Heart right ventricle (tissue), 16 donors: ENCODE measurements at regions of chr19 and their contacts with region 1.

Region 1: DNA sequence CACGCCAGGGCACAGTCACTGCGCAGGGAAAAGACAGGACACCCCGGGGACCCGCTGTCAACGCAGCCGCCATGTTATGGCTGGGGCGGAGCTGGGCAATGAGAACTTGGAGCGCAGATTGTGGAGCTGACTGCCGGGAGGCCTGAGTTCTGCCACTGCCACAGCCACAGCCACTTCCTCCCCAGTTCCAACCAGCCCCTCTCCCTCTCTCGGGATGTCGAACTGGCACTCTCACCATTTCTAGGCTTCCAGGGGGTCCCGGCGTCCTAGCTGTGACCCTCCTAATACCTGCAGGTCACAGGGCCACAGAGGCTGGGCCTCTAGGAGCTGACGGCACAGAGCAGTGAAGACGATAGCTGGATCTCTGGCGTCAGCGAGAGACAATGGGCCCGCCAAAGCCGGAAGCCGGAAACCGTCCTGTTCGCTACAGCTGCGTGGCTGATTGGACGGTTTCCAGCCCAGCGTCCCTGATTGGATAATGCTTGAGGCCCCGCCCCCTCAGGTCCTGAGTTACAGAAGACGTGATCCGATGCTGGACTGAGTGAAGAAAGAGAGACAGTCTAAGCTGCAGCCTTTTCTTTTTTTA is at the start of gene ZNF506:
- DNase-seq: peak; percentile 98 to 100
- ATAC-seq: peak; percentile 98 to 99 (median 98)
- H3K4me3 ChIP-seq: peak within 1 kb of the TSS; percentile 59 to 98 (median 73)
- H3K27ac ChIP-seq: peak within 1 kb of the TSS; percentile 86 to 99 (median 96)
- H3K4me1 ChIP-seq: peaks cover 0 to 43% (median 27%) of the 10 kb centered on the region in 9 donors
- H3K27me3 ChIP-seq: no peaks in the 10 kb centered on the region
- CTCF ChIP-seq: no peak
- total RNA-seq, gene ZNF506: 11.1 to 17.0 (median 13.4) TPM

Region 2: GRCh38 chr19:19663256-19664038 is 158.0 kb before region 1 on chr19 and contains the start of gene ATP13A1:
- intact Hi-C with region 1: loop called in 3 of 10 experiments (anchors 2 to 10 kb)
- DNase-seq: peak; percentile 95 to 97
- ATAC-seq: peak; percentile 97 to 98 (median 98)
- H3K4me3 ChIP-seq: peak within 1 kb of the TSS; percentile 77 to 100 (median 93)
- H3K27ac ChIP-seq: peak within 1 kb of the TSS; percentile 86 to 98 (median 92)
- H3K4me1 ChIP-seq: peaks cover 5 to 38% (median 20%) of the 10 kb centered on the region in 9 donors
- H3K27me3 ChIP-seq: no peaks in the 10 kb centered on the region
- CTCF ChIP-seq: peak in 4 of 9 donors; percentile 9 to 42 (median 16)
- total RNA-seq, gene ATP13A1: 12.3 to 28.2 (median 18.4) TPM

Region 3: DNA sequence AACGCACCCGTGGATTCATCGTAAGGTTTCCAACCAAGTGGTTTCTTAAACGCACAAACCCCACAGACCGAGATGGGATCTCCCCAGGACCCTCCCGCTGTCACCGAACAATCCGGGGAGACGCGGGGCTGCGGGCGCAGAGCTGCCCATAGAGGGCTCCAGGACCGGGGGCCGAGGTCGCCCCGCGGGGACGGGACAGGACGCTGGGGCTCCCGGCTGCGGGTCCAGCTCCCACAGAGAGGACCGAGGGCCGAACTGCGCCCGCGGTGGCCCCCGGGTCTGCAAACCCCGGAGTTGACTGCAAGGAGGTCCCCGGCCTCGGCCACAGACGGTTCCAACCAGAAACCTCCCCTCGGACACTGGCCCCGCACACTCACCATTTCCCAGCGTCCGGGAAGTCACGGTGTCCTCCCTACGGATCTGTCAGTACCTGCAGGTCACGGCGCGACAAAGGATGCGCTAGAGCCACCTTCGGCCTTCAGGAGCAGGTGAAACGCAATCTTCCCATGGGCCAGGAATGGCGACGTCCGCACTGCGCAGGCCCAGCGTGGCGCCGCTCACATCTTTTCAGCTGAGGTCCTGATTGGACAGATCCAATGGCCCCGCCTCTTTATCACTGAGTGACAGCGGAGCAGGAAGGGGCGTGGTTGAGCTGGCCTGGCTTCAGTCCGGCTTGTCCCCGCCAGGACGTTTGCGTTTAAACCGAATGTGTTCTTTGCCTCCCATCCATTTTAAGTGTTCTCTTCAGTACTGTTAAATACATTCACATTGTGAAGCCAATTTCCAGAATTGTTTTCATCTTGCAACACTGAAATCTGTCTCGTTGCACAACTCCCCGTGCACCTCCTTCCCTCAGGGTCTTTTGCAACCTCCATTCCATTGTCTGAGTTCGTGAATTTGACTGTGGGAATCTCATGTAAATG is 88.6 kb before region 1 on chr19 and contains the start of gene ZNF14:
- intact Hi-C with region 1: loop called in 3 of 10 experiments (anchors 2 to 5 kb)
- DNase-seq: peak; percentile 90 to 96
- ATAC-seq: peak; percentile 100
- H3K4me3 ChIP-seq: peak within 1 kb of the TSS; percentile 64 to 95 (median 86)
- H3K27ac ChIP-seq: peak within 1 kb of the TSS in 9 of 10 donors; percentile 61 to 87 (median 72)
- H3K4me1 ChIP-seq: peaks cover 0 to 20% (median 11%) of the 10 kb centered on the region in 9 donors
- H3K27me3 ChIP-seq: no peaks in the 10 kb centered on the region
- CTCF ChIP-seq: peak in 5 of 9 donors; percentile 16 to 42 (median 33)
- total RNA-seq, gene ZNF14: 2.8 to 6.6 (median 4.1) TPM

Region 4: DNA sequence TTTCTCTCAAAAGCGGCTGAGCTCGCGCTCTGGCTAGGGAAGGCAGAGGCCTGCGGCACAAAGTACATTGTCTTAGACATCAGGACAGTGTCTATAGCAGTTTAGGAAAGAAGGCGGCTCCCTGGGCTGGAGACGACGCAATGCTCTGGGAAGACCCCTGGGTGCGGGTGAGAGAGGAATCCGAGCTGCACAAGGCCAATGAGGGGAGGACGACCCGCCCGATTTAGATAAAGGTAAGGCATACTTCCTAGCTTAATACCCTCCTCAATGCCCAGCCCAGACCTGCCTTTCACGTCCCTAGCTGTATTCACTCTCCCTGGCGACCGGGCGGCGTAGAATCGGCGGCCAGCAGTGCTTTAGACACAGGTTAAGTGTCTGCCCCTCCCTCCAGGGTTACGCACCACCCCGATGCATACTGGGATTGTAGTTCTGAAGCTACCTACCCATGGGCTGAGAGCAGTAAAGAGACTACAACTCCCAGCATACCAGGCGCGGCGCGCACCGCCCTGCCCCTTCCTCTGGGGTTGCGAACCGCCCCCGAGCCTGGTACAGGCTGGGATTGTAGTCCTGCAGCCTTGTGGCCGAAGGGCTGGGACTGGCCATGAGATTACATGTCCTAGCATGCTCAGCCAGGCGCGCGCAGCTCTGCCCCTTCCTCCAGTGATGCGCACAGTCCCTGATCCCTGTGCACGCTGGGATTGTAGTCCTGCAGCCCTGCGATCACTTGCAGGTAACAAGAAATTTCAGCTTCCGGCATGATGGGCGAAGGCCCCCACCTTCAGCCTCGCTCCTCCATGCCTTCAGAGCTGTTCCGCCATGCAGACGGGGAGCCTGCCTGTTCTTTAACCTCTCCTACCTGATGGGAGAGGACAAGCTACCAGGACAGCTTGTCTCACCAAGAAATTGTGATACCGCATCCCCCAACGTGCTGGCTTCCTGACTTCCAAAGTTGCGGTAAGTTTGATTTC is 45.1 kb before region 1 on chr19:
- intact Hi-C with region 1: loop called in 1 of 10 experiments (anchors 5 kb)
- DNase-seq: peak; percentile 96 to 98
- ATAC-seq: peak; percentile 100
- H3K4me3 ChIP-seq: peak overlapping the region; percentile 43 to 87 (median 76)
- H3K27ac ChIP-seq: peak overlapping the region in 9 of 10 donors; percentile 35 to 87 (median 75)
- H3K4me1 ChIP-seq: peaks cover 7 to 29% (median 20%) of the 10 kb centered on the region in 9 donors
- H3K27me3 ChIP-seq: no peaks in the 10 kb centered on the region
- CTCF ChIP-seq: peak in 4 of 9 donors; percentile 12 to 35 (median 18)

Region 5: DNA sequence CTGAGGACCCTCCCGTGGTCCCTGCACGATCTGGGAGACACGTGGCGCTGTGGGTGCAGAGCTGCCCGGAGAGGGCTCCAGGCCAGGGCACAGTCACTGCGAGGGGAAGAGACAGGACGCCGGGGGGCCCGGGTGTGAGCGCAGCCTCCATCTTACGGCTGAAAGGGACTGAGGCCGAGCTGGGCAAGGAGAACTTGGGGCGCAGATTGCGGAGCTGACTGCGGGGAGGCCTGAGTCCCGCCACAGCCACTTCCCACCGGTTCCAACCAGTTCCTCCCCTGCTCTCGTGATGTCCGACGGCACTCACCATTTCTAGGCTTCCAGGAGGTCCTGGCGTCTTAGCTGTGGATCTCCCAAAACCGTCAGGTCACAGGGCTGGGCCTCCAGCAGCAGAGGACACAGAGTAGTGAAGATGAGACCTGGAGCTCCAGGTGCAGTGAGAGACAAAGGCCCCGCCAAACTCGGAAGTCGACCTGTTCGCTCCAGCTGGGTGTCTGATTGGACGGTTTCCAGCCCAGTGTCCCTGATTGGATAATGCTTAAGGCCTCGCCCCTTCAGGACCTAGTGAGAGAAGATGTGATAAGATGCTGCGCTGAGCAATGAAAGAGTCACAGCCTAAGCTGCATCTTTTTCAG is 39.4 kb after region 1 on chr19:
- intact Hi-C with region 1: loop called in 3 of 10 experiments (anchors 5 kb)
- DNase-seq: peak in 1 of 2 donors; percentile 15
- ATAC-seq: no peak
- H3K4me3 ChIP-seq: peak overlapping the region in 5 of 10 donors; percentile 13 to 28 (median 24)
- H3K27ac ChIP-seq: no peak overlapping the region
- H3K4me1 ChIP-seq: peaks cover 0 to 6% (median 0%) of the 10 kb centered on the region in 9 donors
- H3K27me3 ChIP-seq: peaks cover 0 to 15% (median 9%) of the 10 kb centered on the region in 7 donors
- CTCF ChIP-seq: no peak

Region 6: GRCh38 chr19:19865739-19866481 is 44.5 kb after region 1 on chr19 and contains the start of gene ZNF253:
- intact Hi-C with region 1: loop called in 3 of 10 experiments (anchors 5 kb)
- DNase-seq: peak; percentile 96 to 99
- ATAC-seq: peak; percentile 99 to 100 (median 99)
- H3K4me3 ChIP-seq: peak within 1 kb of the TSS; percentile 58 to 90 (median 72)
- H3K27ac ChIP-seq: peak within 1 kb of the TSS; percentile 85 to 98 (median 92)
- H3K4me1 ChIP-seq: peaks cover 0 to 49% (median 31%) of the 10 kb centered on the region in 9 donors
- H3K27me3 ChIP-seq: peaks cover 0 to 3% (median 2%) of the 10 kb centered on the region in 7 donors
- CTCF ChIP-seq: no peak
- total RNA-seq, gene ZNF253: 4.8 to 13.0 (median 9.2) TPM

Region 7: DNA sequence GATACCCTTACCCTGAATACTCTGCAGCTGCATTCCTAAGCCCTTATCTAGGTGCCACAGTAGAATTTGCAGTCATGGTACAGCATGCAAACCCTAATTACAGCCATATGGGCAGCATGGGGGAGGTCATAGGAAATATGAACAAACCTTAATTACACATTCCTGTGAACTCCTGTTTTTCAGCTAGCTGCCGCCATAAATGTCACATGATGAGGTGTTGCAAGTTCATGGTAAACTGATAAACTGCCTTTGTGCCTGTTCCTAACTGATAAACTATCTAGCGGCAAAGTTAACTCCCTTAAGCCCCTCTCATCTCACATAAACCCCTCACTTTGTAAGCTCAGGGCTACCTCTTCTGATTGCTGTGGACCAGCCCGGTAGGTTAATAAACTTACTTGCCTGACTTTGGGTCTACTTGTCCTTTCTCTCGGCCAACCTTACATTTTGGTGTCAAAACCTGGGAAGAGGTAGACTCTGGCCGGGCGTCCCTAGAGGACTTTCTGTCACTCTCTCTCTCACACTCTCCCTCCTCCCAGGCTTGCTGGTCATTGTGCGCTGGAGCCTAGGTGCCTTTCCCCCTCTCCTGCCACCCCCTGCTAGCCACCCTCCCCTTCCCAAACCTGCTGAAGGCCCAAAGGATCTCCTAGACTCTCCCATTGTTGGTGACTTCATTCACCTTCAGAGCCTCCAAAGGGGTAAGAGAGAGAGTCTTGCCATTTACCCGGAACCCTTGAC is 122.6 kb after region 1 on chr19:
- intact Hi-C with region 1: no loop called
- DNase-seq: no peak
- ATAC-seq: no peak
- H3K4me3 ChIP-seq: no peak overlapping the region
- H3K27ac ChIP-seq: no peak overlapping the region
- H3K4me1 ChIP-seq: no peaks in the 10 kb centered on the region
- H3K27me3 ChIP-seq: peaks cover 0 to 19% (median 7%) of the 10 kb centered on the region in 7 donors
- CTCF ChIP-seq: no peak